ENCODE measurements at regions of chr19 and their contacts with region 1.

Region 1: DNA sequence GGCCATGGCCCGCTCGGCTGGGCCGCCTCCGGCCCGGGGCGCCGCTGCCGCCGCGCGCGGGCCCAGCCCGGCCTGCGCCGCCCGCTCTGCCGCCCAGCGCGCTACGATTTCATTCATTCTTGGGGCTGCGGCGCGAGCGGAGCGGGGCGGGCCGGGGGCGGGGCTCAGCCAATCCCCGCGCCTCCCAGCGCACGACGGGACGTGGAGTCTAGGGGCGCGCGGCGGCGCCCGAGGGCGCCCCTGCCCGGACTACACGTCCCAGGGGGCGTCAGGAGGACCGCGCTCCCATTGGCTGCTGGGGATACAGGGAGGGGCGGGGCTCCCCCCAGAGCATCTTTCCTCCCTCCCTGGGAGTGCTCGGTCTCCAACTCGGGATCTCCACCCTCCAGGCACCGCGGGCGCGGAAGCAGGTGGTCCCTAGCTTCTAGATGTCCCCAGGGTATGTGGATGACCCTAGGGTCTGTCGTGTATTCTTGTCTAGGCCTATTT is 5.6 kb upstream of the DPF1 start:
- DNase-seq: no peak
- ATAC-seq: peak; percentile 92
- H3K4me3 ChIP-seq: no peak overlapping the region
- H3K27ac ChIP-seq: no peak overlapping the region
- H3K4me1 ChIP-seq: 0 out of 2 replicates have a peak, but pooled peaks cover under 1% of the 10 kb centered on the region
- H3K27me3 ChIP-seq: peaks cover 6 to 8% of the 10 kb centered on the region in 2 experiments; a peak in 3 of 4 replicates
- CTCF ChIP-seq: no peak
- EP300 ChIP-seq: no peak
- POLR2A ChIP-seq: no peak
- RAD21 ChIP-seq: no peak

Region 2: GRCh38 chr19:37893845-37894575 is 335.6 kb before region 1 on chr19:
- CTCF ChIA-PET with region 1: interaction called, 80 read pairs
- POLR2A ChIA-PET with region 1: no interaction called
- RAD21 ChIA-PET with region 1: interaction called, 4 read pairs
- SMC1A ChIA-PET with region 1: no interaction called
- in situ Hi-C with region 1: no loop called
- intact Hi-C with region 1: loop called (anchors 5 kb)
- DNase-seq: no peak
- ATAC-seq: no peak
- H3K4me3 ChIP-seq: no peak overlapping the region
- H3K27ac ChIP-seq: no peak overlapping the region
- H3K4me1 ChIP-seq: no peaks in the 10 kb centered on the region
- H3K27me3 ChIP-seq: peaks cover 0 to 2% of the 10 kb centered on the region in 2 experiments; a peak in 1 of 4 replicates
- CTCF ChIP-seq: no peak
- EP300 ChIP-seq: no peak
- POLR2A ChIP-seq: no peak
- RAD21 ChIP-seq: no peak

Region 3: GRCh38 chr19:38245826-38246498 is 16.3 kb after region 1 on chr19:
- CTCF ChIA-PET with region 1: interaction called, 11 read pairs
- POLR2A ChIA-PET with region 1: no interaction called
- RAD21 ChIA-PET with region 1: no interaction called
- SMC1A ChIA-PET with region 1: no interaction called
- in situ Hi-C with region 1: no loop called
- intact Hi-C with region 1: no loop called
- DNase-seq: no peak
- ATAC-seq: no peak
- H3K4me3 ChIP-seq: no peak overlapping the region
- H3K27ac ChIP-seq: no peak overlapping the region
- H3K4me1 ChIP-seq: no peaks in the 10 kb centered on the region
- H3K27me3 ChIP-seq: no peaks in the 10 kb centered on the region
- CTCF ChIP-seq: no peak
- EP300 ChIP-seq: no peak
- POLR2A ChIP-seq: no peak
- RAD21 ChIP-seq: no peak

Region 4: DNA sequence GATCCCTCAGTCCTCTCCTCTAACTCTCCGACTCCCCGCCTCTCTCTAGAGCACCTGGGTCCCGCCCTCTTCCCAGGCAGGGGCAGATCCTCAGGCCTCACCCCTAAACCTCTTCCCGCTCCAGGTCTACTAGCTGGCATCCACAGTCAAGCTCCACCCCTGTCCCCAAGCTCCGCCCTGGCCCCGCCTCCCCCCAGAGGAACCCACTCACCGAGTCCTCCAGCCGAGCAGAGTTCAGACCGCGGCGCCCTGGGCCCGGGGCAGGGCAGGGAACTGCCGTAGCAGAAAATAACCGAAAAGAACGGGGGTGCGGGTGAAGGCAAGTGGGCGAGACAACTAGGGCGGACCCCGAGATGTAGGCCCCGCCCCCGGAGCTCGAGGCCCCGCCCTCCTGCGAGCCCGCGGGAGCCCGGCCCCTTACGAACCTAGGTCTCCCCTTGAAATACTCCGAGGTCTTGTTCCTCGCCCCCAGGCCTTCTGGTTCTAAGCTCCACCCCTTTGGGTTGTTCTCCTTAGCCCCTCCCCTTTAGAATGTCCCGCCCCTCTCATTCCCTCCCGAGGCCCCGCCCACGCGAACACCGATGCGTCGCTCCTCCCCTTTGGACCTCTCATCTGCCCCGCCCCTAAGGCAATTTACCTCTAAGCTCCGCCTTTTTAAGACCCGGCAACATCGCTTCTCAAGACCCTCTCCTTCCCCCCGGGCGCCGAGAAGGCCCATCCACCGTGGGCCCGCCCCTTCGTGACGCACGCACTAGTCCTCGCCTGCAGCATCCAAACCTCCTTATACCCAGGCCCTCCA is 158.1 kb after region 1 on chr19 and contains the start of gene GGN:
- CTCF ChIA-PET with region 1: no interaction called
- POLR2A ChIA-PET with region 1: no interaction called
- RAD21 ChIA-PET with region 1: no interaction called
- SMC1A ChIA-PET with region 1: no interaction called
- in situ Hi-C with region 1: no loop called
- intact Hi-C with region 1: loop called (anchors 5 kb)
- DNase-seq: no peak
- ATAC-seq: peak; percentile 80
- H3K4me3 ChIP-seq: peak within 1 kb of the TSS; percentile 69
- H3K27ac ChIP-seq: no peak within 1 kb of the TSS
- H3K4me1 ChIP-seq: peaks cover 12% of the 10 kb centered on the region
- H3K27me3 ChIP-seq: no peaks in the 10 kb centered on the region; a peak in 1 of 4 replicates
- CTCF ChIP-seq: no peak
- EP300 ChIP-seq: no peak
- POLR2A ChIP-seq: no peak; the same call in 1 of the 2 replicates
- RAD21 ChIP-seq: no peak
- polyA plus RNA-seq, gene GGN: not detected